ENCODE measurements at regions of chr7 and their contacts with region 1.

Region 1: GRCh38 chr7:24622646-24623182 is 49.5 kb downstream of the PALS2 start:
- DNase-seq: no peak
- ATAC-seq: peak; percentile 61
- H3K4me3 ChIP-seq: peak overlapping the region; percentile 13; the same call in 1 of the 2 replicates
- H3K27ac ChIP-seq: peak overlapping the region; percentile 57
- H3K4me1 ChIP-seq: peaks cover 4% of the 10 kb centered on the region; the same call in 1 of the 2 replicates
- H3K27me3 ChIP-seq: no peaks in the 10 kb centered on the region
- CTCF ChIP-seq: no peak
- EP300 ChIP-seq: no peak
- POLR2A ChIP-seq: no peak
- RAD21 ChIP-seq: no peak

Region 2: GRCh38 chr7:24609059-24609458 is 13.7 kb before region 1 on chr7:
- CTCF ChIA-PET with region 1: interaction called, 10 read pairs
- POLR2A ChIA-PET with region 1: interaction called, 3 read pairs
- RAD21 ChIA-PET with region 1: no interaction called
- SMC1A ChIA-PET with region 1: interaction called, 13 read pairs
- in situ Hi-C with region 1: no loop called
- intact Hi-C with region 1: no loop called
- DNase-seq: no peak
- ATAC-seq: no peak
- H3K4me3 ChIP-seq: no peak overlapping the region
- H3K27ac ChIP-seq: no peak overlapping the region
- H3K4me1 ChIP-seq: peaks cover 9% of the 10 kb centered on the region; the same call in 1 of the 2 replicates
- H3K27me3 ChIP-seq: no peaks in the 10 kb centered on the region
- CTCF ChIP-seq: no peak
- EP300 ChIP-seq: no peak
- POLR2A ChIP-seq: no peak
- RAD21 ChIP-seq: no peak